ENCODE measurements at regions of chr11 and their contacts with region 1.

Region 1: GRCh38 chr11:125592305-125593112 is at the start of gene STT3A:
- DNase-seq: peak; percentile 99
- ATAC-seq: peak; percentile 93
- H3K4me3 Mint-ChIP-seq: peak within 1 kb of the TSS; percentile 97
- H3K27ac Mint-ChIP-seq: peak within 1 kb of the TSS; percentile 95
- H3K4me1 Mint-ChIP-seq: peaks cover 48% of the 10 kb centered on the region
- H3K27me3 Mint-ChIP-seq: no peaks in the 10 kb centered on the region
- total RNA-seq, gene STT3A: 127 to 128 TPM

Region 2: DNA sequence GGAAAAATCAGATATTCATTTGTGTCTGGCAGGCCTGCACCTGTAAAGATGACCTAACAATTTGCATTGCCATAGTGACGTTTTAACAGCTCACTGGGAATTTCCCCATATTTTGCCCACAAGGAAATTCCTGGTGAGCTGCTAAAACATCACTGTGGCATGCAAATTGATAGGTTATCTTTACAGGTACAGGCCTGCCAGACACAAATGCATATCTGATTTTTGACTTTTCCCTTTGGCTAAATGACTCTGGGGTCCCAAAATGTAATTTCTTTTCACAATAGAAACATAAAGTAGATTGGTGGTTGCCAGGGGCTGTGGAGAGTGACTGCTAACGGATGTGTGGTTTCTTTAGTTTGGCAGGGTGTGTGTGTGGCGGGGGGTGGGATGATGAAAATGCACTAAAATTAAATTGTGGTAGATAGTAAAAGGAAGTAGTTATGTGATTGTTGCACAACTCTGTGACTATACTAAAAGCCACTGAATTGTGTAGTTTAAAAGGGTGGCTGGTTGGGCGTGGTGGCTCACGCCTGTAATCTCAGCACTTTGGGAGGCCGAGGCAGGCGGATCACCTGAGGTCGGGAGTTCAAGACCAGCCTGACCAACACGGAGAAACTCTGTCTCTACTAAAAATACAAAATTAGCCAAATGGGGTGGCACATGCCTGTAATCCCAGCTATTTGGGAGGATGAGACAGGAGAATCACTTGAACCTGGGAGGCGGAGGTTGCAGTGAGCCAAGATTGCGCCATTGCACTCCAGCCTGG is 78.0 kb before region 1 on chr11:
- CTCF ChIA-PET with region 1: interaction called, 3 read pairs
- POLR2A ChIA-PET with region 1: no interaction called
- intact Hi-C with region 1: loop called in 1 of 2 experiments (anchors 1 kb)
- DNase-seq: peak; percentile 78
- ATAC-seq: peak; percentile 86
- H3K4me3 Mint-ChIP-seq: peak overlapping the region; percentile 7
- H3K27ac Mint-ChIP-seq: peak overlapping the region; percentile 85
- H3K4me1 Mint-ChIP-seq: peaks cover 39% of the 10 kb centered on the region
- H3K27me3 Mint-ChIP-seq: no peaks in the 10 kb centered on the region

Region 3: GRCh38 chr11:126282736-126283591 is 690.5 kb after region 1 on chr11 and contains the start of gene TIRAP:
- CTCF ChIA-PET with region 1: no interaction called
- POLR2A ChIA-PET with region 1: no interaction called
- intact Hi-C with region 1: loop called in 1 of 2 experiments (anchors 5 kb)
- DNase-seq: peak; percentile 76
- ATAC-seq: peak; percentile 53
- H3K4me3 Mint-ChIP-seq: peak within 1 kb of the TSS; percentile 81
- H3K27ac Mint-ChIP-seq: peak within 1 kb of the TSS; percentile 94
- H3K4me1 Mint-ChIP-seq: peaks cover 46% of the 10 kb centered on the region
- H3K27me3 Mint-ChIP-seq: no peaks in the 10 kb centered on the region
- total RNA-seq, gene TIRAP: 5.3 to 7.5 TPM